ENCODE measurements at regions of chr10 and their contacts with region 1.

Region 1: DNA sequence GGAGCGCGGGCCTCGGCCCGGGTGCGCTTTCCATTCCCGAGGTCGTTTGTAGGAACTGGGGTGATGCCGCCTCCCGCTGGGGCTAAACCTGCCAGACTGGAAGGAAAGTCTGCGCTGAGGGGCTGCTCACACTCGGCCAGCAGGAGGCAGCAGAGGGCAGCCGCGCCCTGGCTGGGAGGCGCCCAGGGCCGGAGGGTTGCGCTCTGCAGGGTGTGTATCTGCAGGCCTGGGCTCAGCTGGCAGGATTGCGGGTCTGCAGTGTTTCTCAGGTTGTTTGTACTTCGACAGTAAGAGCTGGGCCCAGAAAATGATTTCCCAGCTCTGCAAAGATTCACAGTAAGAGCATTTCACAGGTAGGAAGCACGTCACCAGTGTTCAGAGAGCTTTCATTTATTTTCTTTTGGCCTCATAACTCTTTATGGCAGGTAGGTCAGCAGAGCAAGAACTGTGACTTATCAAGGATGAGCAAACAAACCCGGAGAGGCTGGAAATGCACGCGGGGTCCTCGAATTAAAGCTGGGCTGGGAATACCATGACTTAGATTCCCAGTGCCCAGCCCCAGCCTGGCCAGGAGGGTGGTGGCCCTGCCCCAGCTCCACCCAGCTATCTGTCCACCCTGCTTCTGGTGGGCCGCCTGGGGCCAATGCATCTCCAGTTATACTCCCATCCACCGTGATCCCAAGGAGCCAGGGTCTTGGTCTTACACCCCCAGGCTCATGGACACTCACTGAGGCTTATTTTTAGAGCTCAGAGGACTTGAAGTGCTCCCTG is 15.2 kb upstream of the PPP2R2D start:
- DNase-seq: peak; percentile 83
- H3K4me3 Mint-ChIP-seq: no peak overlapping the region
- H3K27ac Mint-ChIP-seq: no peak overlapping the region
- H3K4me1 Mint-ChIP-seq: peaks cover 6% of the 10 kb centered on the region
- H3K27me3 Mint-ChIP-seq: peaks cover 5% of the 10 kb centered on the region

Region 2: DNA sequence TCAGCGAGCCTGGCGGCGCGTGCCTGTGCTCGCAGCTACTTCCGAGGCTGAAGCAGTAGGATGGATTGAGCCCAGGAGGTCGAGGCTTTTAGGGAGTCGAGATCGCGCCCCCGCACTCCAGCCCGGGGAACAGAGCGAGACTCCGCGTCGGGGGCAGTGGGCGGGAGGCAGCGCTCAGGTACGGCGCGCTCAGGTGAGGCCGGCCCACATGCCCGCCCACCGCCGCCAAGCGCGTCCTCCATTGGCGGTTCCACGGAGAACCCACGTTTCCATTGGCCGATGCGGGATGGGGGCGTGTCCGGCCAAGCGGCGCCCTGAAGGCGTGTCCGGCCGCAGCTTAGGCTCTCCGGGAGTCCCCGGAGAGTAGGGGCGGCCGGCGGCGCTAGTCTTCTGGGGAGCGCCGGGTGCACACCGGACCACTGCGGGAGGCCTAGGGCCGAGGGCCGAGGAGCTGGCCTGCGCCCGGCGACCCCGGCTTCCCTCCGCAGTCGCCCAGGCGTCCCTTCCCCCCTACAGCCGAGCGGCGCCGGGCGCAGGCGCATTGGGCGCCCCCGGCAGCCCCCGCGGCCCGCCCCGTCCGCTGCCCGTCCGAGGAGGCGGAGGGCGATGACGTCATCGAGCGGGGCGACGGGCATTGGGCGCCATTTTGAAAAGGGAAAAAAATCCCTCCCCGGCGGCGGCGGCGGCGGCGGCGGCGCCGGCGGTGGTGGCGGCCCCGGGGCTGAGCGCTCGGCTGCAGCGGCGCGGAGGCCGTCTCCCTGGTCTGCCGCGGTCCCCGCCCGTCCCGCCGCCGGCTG is 15.0 kb after region 1 on chr10 and contains the start of gene PPP2R2D:
- CTCF ChIA-PET with region 1: interaction called, 18 read pairs
- POLR2A ChIA-PET with region 1: interaction called, 5 read pairs
- DNase-seq: peak; percentile 94
- H3K4me3 Mint-ChIP-seq: peak within 1 kb of the TSS; percentile 88
- H3K27ac Mint-ChIP-seq: peak within 1 kb of the TSS; percentile 89
- H3K4me1 Mint-ChIP-seq: peaks cover 69% of the 10 kb centered on the region
- H3K27me3 Mint-ChIP-seq: peaks cover 12% of the 10 kb centered on the region
- total RNA-seq, gene PPP2R2D: 40.3 to 40.8 TPM

Region 3: GRCh38 chr10:131943021-131943814 is 57.6 kb after region 1 on chr10:
- CTCF ChIA-PET with region 1: interaction called, 13 read pairs
- POLR2A ChIA-PET with region 1: no interaction called
- DNase-seq: no peak
- H3K4me3 Mint-ChIP-seq: no peak overlapping the region
- H3K27ac Mint-ChIP-seq: no peak overlapping the region
- H3K4me1 Mint-ChIP-seq: peaks cover 11% of the 10 kb centered on the region
- H3K27me3 Mint-ChIP-seq: no peaks in the 10 kb centered on the region

Region 4: DNA sequence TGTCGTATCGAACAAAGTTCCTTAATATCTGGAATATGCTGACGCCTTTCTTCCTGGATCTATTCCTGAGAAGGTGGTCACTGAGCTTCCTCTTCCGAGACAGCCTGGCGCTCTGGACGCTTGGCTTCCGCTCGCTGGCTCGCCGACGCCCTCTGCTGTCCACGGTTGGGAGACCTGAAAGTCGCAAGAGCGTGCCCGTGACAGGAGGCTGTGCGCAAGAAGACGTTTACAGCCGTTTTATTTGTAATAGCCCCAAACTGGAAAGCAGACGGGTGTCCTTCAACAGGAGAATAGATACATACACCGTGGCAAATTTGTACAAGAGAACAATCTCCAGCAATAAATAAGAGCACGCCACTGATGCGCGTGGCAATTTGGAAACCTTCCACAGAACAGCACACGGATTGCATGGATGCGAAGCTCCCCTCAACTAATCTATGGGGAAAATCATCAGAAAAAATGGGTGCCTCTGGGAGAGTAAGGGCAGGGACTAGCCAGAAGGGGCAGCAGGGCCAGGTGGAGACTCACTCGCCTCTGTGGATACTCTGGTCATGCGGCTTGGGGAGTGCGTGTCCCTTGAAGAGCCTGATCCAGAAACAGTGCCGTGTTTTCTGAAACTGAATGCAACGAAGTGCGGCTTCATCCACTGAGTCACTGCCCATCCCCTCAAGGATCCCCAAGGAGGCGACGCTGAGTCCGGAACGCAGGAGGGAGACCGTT is 137.7 kb after region 1 on chr10:
- CTCF ChIA-PET with region 1: interaction called, 81 read pairs
- POLR2A ChIA-PET with region 1: interaction called, 3 read pairs
- DNase-seq: peak; percentile 79
- H3K4me3 Mint-ChIP-seq: no peak overlapping the region
- H3K27ac Mint-ChIP-seq: no peak overlapping the region
- H3K4me1 Mint-ChIP-seq: peaks cover 4% of the 10 kb centered on the region
- H3K27me3 Mint-ChIP-seq: peaks cover 24% of the 10 kb centered on the region

Region 5: DNA sequence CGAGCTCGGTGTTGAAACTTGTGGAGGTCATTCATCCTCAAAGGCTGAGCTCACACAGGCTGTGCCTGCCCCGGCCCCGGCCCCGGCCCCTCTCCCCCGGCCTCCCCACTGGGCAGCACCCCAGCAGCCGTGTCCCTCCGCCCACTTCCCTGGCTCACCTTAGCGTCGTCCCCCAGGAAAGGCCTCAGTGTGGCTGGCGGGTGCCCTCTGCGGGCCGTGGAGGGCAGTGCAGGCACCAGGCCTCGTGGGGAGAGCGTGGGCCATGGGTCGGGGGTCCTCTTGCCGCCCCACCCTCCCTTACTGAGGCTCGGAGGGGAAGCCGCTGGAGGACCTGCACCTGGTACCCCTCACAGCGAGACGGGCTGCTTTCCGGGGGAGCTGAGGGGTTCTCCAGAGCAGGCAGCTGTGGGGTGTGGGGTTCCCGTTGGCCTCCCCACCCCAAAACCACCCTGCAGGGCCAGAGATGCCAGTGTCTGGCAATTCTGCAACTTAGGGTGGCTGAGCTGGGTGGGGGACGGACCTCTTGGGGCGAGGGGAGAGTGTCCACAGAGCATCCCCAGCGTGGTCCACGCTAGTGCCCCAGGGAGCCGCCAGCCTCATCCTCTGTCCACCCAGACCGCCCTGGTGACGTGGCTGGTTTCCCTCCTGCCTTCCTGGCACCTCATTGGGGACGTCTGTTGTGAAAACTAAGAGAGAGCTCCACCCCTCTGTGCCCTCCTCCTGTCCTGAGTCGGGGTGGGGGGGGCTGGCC is 257.0 kb after region 1 on chr10:
- CTCF ChIA-PET with region 1: interaction called, 10 read pairs
- POLR2A ChIA-PET with region 1: no interaction called
- DNase-seq: peak; percentile 51
- H3K4me3 Mint-ChIP-seq: no peak overlapping the region
- H3K27ac Mint-ChIP-seq: no peak overlapping the region
- H3K4me1 Mint-ChIP-seq: no peaks in the 10 kb centered on the region
- H3K27me3 Mint-ChIP-seq: no peaks in the 10 kb centered on the region

Measured in activated CD4-positive, alpha-beta memory T cell treated with anti-CD3 and anti-CD28 coated beads, Interleukin-2, amount 10 ng/mL, durations not matched to agents 7 days and 5 days (primary cell).